Psoas muscle (tissue), 8 donors: ENCODE measurements at regions of chr7 and their contacts with region 1.

Region 1: GRCh38 chr7:105765846-105766245 is 110.6 kb downstream of the ATXN7L1 start:
- DNase-seq: no peak
- ATAC-seq: no peak
- H3K4me3 ChIP-seq: no peak overlapping the region
- H3K27ac ChIP-seq: no peak overlapping the region
- H3K4me1 ChIP-seq: peaks cover 12% of the 10 kb centered on the region
- H3K27me3 ChIP-seq: no peaks in the 10 kb centered on the region
- CTCF ChIP-seq: no peak

Region 2: DNA sequence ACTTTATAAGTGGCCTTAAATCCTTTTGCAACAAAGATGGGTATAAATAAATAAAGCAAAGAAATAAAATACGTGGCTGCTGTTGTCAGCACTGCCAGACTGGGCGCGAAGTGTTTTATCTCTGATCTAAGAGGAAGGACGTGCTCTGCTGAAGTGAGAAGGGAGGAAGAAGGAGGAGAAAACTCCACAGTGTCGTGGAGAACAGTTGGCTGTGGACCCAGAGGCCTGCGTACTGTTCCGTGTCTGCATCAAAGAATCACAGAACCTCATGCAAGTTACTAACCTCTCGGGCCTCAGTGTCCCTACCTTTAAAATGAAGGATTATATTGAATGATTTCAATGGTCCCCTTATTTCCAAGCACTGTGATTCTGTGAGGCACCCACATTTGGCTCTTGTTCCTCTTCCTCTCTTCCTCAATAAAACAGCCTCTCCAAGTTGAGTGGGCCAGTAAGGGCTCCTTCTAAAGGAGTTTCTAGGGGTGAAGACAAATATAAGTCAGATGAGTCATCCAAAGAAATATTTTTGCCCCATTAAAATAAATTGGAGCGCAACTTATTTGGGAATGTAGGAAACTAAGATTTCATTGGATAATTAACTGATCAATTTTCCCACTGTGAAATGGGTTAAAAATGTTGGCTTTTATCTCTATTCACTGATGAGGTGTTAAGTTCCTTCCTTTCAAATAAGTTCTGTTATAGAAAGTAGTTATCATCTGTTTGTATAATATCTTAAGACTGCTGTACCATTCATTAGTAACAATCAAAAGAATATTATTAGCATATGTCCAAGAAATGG is 57.7 kb before region 1 on chr7:
- intact Hi-C with region 1: no loop called
- DNase-seq: no peak
- ATAC-seq: no peak
- H3K4me3 ChIP-seq: no peak overlapping the region
- H3K27ac ChIP-seq: no peak overlapping the region
- H3K4me1 ChIP-seq: no peaks in the 10 kb centered on the region
- H3K27me3 ChIP-seq: no peaks in the 10 kb centered on the region
- CTCF ChIP-seq: no peak

Region 3: DNA sequence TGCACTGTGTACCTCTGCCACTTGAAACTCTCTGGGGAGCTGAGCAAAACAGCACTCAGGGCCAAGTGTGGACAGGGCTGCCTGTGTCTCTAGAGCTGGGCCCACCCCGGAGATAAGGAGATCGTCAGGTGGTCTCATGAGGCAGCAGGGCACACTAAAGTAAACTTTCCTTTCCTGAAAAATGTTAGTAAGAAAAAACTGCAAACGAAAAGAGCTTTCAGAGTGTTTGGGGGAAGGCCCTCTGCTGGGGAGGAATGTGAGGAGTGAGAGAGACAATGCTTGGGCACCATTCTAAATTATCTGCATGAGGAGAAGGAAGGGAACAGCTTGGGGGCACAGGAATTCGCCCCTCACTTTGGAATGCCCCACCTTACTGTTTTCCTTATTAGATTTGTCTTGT is 17.1 kb before region 1 on chr7:
- intact Hi-C with region 1: no loop called
- DNase-seq: no peak
- ATAC-seq: no peak
- H3K4me3 ChIP-seq: no peak overlapping the region
- H3K27ac ChIP-seq: no peak overlapping the region
- H3K4me1 ChIP-seq: no peaks in the 10 kb centered on the region
- H3K27me3 ChIP-seq: no peaks in the 10 kb centered on the region
- CTCF ChIP-seq: no peak

Region 4: GRCh38 chr7:106153891-106154449 is 388.1 kb after region 1 on chr7:
- intact Hi-C with region 1: loop called (anchors 2 to 10 kb)
- DNase-seq: peak; percentile 79 to 91
- ATAC-seq: peak; percentile 96 to 100 (median 98)
- H3K4me3 ChIP-seq: peak overlapping the region; percentile 34
- H3K27ac ChIP-seq: no peak overlapping the region
- H3K4me1 ChIP-seq: peaks cover 10% of the 10 kb centered on the region
- H3K27me3 ChIP-seq: no peaks in the 10 kb centered on the region
- CTCF ChIP-seq: peak; percentile 96